Activated CD8-positive, alpha-beta T cell treated with anti-CD3 and anti-CD28 coated beads for 36 hours (primary cell): ENCODE measurements at regions of chr10 and their contacts with region 1.

Region 1: GRCh38 chr10:119207367-119207668 is at the start of gene GRK5:
- DNase-seq: peak; percentile 95
- ATAC-seq: peak; percentile 90
- H3K4me3 Mint-ChIP-seq: peak within 1 kb of the TSS; percentile 88
- H3K27ac Mint-ChIP-seq: peak within 1 kb of the TSS; percentile 96
- H3K4me1 Mint-ChIP-seq: peaks cover 35% of the 10 kb centered on the region
- H3K27me3 Mint-ChIP-seq: no peaks in the 10 kb centered on the region
- CTCF ChIP-seq: no peak
- total RNA-seq, gene GRK5: 14.8 to 15.6 TPM

Region 2: GRCh38 chr10:119178372-119179119 is 28.8 kb before region 1 on chr10 and contains the start of gene PRDX3:
- CTCF ChIA-PET with region 1: interaction called, 10 read pairs
- POLR2A ChIA-PET with region 1: interaction called, 3 read pairs
- intact Hi-C with region 1: no loop called
- DNase-seq: peak; percentile 97
- ATAC-seq: peak; percentile 98
- H3K4me3 Mint-ChIP-seq: peak within 1 kb of the TSS; percentile 87
- H3K27ac Mint-ChIP-seq: peak within 1 kb of the TSS; percentile 92
- H3K4me1 Mint-ChIP-seq: peaks cover 29% of the 10 kb centered on the region
- H3K27me3 Mint-ChIP-seq: no peaks in the 10 kb centered on the region
- CTCF ChIP-seq: no peak
- total RNA-seq, gene PRDX3: 198 to 203 TPM

Region 3: DNA sequence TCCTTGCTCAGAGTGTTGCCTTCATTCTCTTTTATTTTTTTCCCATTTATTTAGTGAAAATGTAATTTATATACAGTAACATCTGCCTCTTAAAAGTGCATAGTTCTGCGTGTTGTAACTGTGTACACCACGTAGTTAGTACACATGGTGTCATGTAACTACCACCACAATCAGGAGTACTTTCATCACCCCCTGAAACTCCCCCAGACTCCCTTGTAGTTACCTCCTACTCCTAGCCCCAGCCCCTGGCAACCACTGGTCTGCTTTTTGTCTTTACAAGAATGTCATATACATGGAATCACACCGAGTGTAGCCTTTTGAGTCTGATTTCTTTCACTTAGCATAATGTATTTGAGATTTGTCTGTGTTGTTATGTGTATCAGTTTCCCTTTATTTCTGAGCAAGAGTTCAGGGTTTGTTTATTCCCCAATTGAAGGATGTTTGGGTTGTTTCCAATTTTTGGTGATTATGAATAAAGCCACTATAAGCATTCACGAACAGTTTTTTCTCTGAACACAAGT is 50.6 kb after region 1 on chr10:
- CTCF ChIA-PET with region 1: no interaction called
- POLR2A ChIA-PET with region 1: no interaction called
- intact Hi-C with region 1: no loop called
- DNase-seq: no peak
- ATAC-seq: no peak
- H3K4me3 Mint-ChIP-seq: no peak overlapping the region
- H3K27ac Mint-ChIP-seq: no peak overlapping the region
- H3K4me1 Mint-ChIP-seq: peaks cover 21% of the 10 kb centered on the region
- H3K27me3 Mint-ChIP-seq: no peaks in the 10 kb centered on the region
- CTCF ChIP-seq: no peak

Region 4: DNA sequence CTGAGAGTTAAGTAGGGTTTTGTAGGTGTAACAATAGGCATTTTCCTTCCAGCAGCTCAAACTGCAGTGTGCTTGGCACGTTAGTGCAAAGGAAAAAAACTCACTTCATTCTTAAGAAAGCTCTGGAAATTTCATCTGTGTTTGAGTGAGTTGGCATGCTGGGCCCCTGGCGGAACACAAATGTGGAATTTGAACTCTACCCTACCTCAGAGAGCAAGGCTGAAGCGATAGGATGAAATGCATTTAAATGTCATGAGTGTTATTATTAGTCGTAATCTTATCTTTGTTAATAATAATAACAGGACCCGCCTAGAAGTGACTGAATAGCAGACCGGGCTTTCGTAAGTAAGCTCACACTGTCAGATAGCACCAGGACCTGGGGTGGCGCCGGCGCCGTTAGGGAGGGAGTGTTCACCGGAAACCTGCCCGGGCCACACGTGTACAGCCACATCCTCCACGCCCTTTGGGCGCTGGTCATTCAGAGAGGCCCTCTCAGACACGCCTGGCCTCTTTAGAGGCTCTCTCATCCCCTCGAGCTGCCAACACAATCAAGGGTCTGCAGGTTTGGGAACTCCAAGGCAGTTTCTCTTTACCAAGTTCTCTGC is 63.5 kb after region 1 on chr10:
- CTCF ChIA-PET with region 1: interaction called, 8 read pairs
- POLR2A ChIA-PET with region 1: interaction called, 4 read pairs
- intact Hi-C with region 1: loop called (anchors 2 kb)
- DNase-seq: peak; percentile 78
- ATAC-seq: peak; percentile 50
- H3K4me3 Mint-ChIP-seq: peak overlapping the region; percentile 31
- H3K27ac Mint-ChIP-seq: peak overlapping the region; percentile 91
- H3K4me1 Mint-ChIP-seq: peaks cover 54% of the 10 kb centered on the region
- H3K27me3 Mint-ChIP-seq: no peaks in the 10 kb centered on the region
- CTCF ChIP-seq: no peak

Region 5: GRCh38 chr10:119315128-119316001 is 108.0 kb after region 1 on chr10:
- CTCF ChIA-PET with region 1: interaction called, 12 read pairs
- POLR2A ChIA-PET with region 1: interaction called, 11 read pairs
- intact Hi-C with region 1: loop called (anchors 2 kb)
- DNase-seq: peak; percentile 93
- ATAC-seq: peak; percentile 78
- H3K4me3 Mint-ChIP-seq: peak overlapping the region; percentile 27
- H3K27ac Mint-ChIP-seq: peak overlapping the region; percentile 95
- H3K4me1 Mint-ChIP-seq: peaks cover 54% of the 10 kb centered on the region
- H3K27me3 Mint-ChIP-seq: peaks cover 1% of the 10 kb centered on the region
- CTCF ChIP-seq: no peak

Region 6: DNA sequence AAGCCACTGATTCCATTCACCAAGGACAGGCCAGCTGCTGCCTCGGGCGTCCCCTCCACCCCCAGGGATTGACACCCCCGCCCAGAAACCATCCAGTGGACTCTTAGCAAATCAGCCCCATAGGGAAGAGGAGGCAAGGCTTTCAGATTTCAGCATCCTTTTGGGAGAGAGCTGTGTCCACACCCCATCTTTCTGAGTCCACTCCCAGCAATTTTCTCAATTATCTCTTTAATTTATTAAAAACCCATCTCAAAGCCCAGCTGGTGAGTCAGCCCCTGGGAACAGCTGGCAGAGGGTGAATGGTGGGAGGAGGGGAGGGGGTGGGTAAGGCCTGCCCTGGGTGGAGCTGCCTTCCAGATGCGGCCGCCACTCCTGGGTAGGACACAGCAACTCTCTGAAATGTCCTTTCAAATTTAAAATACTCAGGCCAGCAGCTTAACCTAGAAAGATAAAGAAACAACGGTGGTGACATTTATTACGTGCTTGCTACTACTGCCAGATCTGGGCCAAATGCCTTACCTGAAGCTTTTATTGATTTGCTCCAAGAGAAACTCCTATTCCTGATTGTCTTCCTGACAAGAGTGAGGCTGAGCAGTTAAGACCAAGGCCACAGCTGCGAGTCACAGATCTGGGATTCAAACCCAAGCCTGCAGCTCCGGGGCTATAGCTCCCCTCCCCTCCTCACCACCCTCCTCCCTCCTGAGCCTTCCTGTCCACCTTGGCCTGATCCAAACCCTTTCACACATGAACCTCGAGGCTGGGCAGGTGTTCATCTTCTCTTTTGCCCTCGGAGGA is 214.8 kb after region 1 on chr10:
- CTCF ChIA-PET with region 1: interaction called, 49 read pairs
- POLR2A ChIA-PET with region 1: interaction called, 7 read pairs
- intact Hi-C with region 1: no loop called
- DNase-seq: no peak
- ATAC-seq: no peak
- H3K4me3 Mint-ChIP-seq: no peak overlapping the region
- H3K27ac Mint-ChIP-seq: no peak overlapping the region
- H3K4me1 Mint-ChIP-seq: no peaks in the 10 kb centered on the region
- H3K27me3 Mint-ChIP-seq: no peaks in the 10 kb centered on the region
- CTCF ChIP-seq: no peak